PC-3 (cell line): ENCODE measurements at regions of chr11 and their contacts with region 1.

Region 1: GRCh38 chr11:33742249-33742851 is 6.1 kb upstream of the CD59 start:
- DNase-seq: peak; percentile 60
- ATAC-seq: peak; percentile 72
- H3K4me3 ChIP-seq: no peak overlapping the region
- H3K27ac ChIP-seq: 0 out of 2 replicates have a peak overlapping the region, but pooled peaks have one; percentile 5
- H3K4me1 ChIP-seq: peaks cover 9% of the 10 kb centered on the region
- H3K27me3 ChIP-seq: no peaks in the 10 kb centered on the region
- CTCF ChIP-seq: peak; percentile 66

Region 2: GRCh38 chr11:33362051-33362910 is 380.1 kb before region 1 on chr11:
- CTCF ChIA-PET with region 1: interaction called, 7 read pairs
- POLR2A ChIA-PET with region 1: interaction called, 3 read pairs
- intact Hi-C with region 1: loop called (anchors 2 kb)
- DNase-seq: peak; percentile 71
- ATAC-seq: peak; percentile 53
- H3K4me3 ChIP-seq: no peak overlapping the region
- H3K27ac ChIP-seq: no peak overlapping the region
- H3K4me1 ChIP-seq: no peaks in the 10 kb centered on the region
- H3K27me3 ChIP-seq: no peaks in the 10 kb centered on the region
- CTCF ChIP-seq: peak; percentile 76

Region 3: GRCh38 chr11:33542921-33543320 is 199.4 kb before region 1 on chr11:
- CTCF ChIA-PET with region 1: interaction called, 5 read pairs
- POLR2A ChIA-PET with region 1: no interaction called
- intact Hi-C with region 1: loop called (anchors 5 kb)
- DNase-seq: peak; percentile 72
- ATAC-seq: peak; percentile 68
- H3K4me3 ChIP-seq: no peak overlapping the region
- H3K27ac ChIP-seq: no peak overlapping the region
- H3K4me1 ChIP-seq: peaks cover 27% of the 10 kb centered on the region
- H3K27me3 ChIP-seq: no peaks in the 10 kb centered on the region
- CTCF ChIP-seq: peak; percentile 79

Region 4: DNA sequence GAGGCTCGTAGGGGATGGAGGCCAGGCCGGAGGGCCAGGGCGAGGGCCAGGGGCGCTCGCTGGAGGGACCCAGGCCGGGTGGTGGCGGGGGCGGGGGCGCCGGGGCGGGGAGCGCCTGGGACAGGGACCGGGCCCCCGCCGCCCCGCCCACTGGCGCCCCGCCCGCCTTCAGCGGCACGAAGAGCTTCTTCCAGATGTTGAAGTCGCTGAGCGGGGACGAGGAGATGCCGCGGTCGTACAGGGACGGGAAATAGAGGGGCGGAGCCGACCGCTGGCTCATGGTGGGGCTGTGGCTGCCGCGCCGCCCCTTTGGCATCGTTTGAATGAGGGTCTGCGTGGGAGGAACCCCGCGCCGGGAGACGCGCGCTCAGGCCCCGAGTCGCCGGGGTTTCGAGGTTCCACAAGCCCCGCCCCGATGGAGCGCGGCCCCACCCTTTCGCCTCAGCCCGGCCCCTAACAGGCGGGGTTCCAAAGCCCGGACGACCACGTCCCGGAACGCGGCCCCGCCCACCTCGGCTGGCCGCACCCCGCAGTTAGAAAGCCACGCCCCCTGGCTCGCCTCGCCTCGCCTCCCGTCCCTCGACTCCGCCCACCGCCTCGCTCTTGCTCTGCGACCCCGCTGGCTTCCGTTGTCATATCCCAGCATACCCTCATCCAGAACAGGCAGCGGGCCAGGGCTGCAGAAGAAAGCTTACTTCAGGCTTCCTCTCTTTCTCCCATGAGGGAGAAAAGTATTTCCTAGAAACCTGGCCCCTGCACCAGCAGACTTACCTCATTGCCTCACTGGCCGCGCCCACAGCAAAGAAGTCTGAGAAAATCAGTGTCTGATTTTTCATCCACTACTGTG is 41.7 kb before region 1 on chr11 and contains the start of gene C11orf91:
- CTCF ChIA-PET with region 1: interaction called, 17 read pairs
- POLR2A ChIA-PET with region 1: interaction called, 3 read pairs
- intact Hi-C with region 1: no loop called
- DNase-seq: peak; percentile 93
- ATAC-seq: peak; percentile 45
- H3K4me3 ChIP-seq: peak within 1 kb of the TSS; percentile 61
- H3K27ac ChIP-seq: peak within 1 kb of the TSS; percentile 99
- H3K4me1 ChIP-seq: peaks cover 67% of the 10 kb centered on the region
- H3K27me3 ChIP-seq: no peaks in the 10 kb centered on the region
- CTCF ChIP-seq: no peak
- total RNA-seq, gene C11orf91: 1.0 TPM in 1 of 2 replicates, not detected in the other

Region 5: DNA sequence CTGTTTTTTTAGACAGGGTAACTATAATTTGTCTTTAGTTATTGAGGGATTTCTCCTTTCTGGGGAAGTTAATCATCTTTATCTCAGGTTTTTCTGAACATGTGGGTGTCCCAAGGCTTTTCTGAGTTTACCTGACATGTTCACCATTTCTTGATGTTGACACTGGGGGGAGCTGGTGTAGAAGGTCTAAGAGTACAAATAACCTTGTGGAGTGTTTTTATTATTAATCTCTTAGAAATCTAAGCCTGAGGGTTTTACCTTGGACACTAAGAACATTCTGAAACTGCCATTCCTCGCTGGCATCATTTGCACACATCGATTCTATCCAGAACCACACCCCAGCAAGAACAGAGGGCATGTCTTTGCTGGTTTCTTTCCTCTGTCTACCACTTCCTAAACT is 26.1 kb before region 1 on chr11:
- CTCF ChIA-PET with region 1: interaction called, 22 read pairs
- POLR2A ChIA-PET with region 1: interaction called, 4 read pairs
- intact Hi-C with region 1: no loop called
- DNase-seq: peak; percentile 65
- ATAC-seq: peak; percentile 58
- H3K4me3 ChIP-seq: no peak overlapping the region
- H3K27ac ChIP-seq: peak overlapping the region; percentile 85
- H3K4me1 ChIP-seq: peaks cover 57% of the 10 kb centered on the region
- H3K27me3 ChIP-seq: no peaks in the 10 kb centered on the region
- CTCF ChIP-seq: peak; percentile 59

Region 6: GRCh38 chr11:33941637-33942160 is 199.3 kb after region 1 on chr11:
- CTCF ChIA-PET with region 1: interaction called, 17 read pairs
- POLR2A ChIA-PET with region 1: no interaction called
- intact Hi-C with region 1: no loop called
- DNase-seq: no peak
- ATAC-seq: peak; percentile 53; the same call in 1 of the 2 replicates
- H3K4me3 ChIP-seq: no peak overlapping the region
- H3K27ac ChIP-seq: no peak overlapping the region
- H3K4me1 ChIP-seq: peaks cover 10% of the 10 kb centered on the region; the same call in 1 of the 2 replicates
- H3K27me3 ChIP-seq: no peaks in the 10 kb centered on the region
- CTCF ChIP-seq: no peak